Endothelial cell of umbilical vein (primary cell): ENCODE measurements at regions of chr17 and their contacts with region 1.

Region 1: GRCh38 chr17:72725433-72726068 is 366.9 kb downstream of the SLC39A11 start:
- DNase-seq: peak; percentile 53
- H3K4me3 ChIP-seq: no peak overlapping the region
- H3K27ac ChIP-seq: no peak overlapping the region
- H3K4me1 ChIP-seq: peaks cover 4% of the 10 kb centered on the region
- H3K27me3 ChIP-seq: no peaks in the 10 kb centered on the region
- CTCF ChIP-seq: peak; percentile 83 to 93
- POLR2A ChIP-seq: no peak

Region 2: GRCh38 chr17:72985881-72986720 is 260.6 kb after region 1 on chr17:
- CTCF ChIA-PET with region 1: interaction called, 61 read pairs
- POLR2A ChIA-PET with region 1: no interaction called
- dilution Hi-C with region 1: no loop called
- intact Hi-C with region 1: loop called (anchors 1 kb)
- DNase-seq: peak; percentile 53
- H3K4me3 ChIP-seq: no peak overlapping the region
- H3K27ac ChIP-seq: no peak overlapping the region
- H3K4me1 ChIP-seq: peaks cover 12% of the 10 kb centered on the region
- H3K27me3 ChIP-seq: no peaks in the 10 kb centered on the region
- CTCF ChIP-seq: peak; percentile 88 to 89
- POLR2A ChIP-seq: no peak

Region 3: DNA sequence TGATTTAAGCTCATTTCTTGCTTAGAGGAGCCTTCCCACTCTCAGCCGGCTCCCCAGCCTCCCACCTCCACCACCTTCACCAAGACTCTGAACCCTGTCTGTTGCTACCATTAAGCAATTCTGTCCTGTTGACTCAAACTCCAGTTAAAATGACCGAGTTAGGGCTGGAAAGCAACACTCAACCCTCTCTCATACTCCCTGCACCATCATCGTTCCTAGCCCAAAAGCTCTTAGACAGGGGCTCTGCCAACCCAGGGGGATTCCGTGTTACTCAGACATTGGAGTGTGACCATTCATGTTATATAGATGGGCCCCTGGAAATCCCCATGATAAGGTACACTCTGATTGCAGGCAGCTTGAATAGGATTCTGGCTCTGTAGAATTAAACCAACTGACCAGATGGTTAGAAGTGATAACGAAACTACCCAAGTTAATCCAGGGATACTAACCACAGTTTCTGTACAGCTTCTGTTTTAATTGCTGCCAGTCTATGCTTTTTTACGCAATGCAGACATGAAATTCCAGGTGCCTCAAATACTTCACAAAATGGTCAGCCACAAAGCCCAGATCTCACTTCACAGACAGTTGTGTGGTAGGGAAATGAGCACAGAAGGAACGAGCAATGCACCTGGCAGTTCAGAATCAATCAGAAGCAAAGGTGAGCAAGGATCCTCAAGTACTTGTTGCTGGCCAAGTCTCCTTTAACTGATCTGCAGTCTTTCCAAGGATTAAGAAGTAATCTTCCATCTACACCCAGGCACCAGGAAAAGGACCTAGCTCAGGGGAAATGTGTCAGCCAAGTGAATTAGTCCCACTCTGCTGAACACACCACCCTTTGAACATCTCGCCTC is 441.4 kb after region 1 on chr17:
- CTCF ChIA-PET with region 1: interaction called, 11 read pairs
- POLR2A ChIA-PET with region 1: no interaction called
- dilution Hi-C with region 1: no loop called
- intact Hi-C with region 1: no loop called
- DNase-seq: no peak
- H3K4me3 ChIP-seq: no peak overlapping the region
- H3K27ac ChIP-seq: no peak overlapping the region
- H3K4me1 ChIP-seq: no peaks in the 10 kb centered on the region
- H3K27me3 ChIP-seq: peaks cover 47 to 53% of the 10 kb centered on the region in 2 experiments
- CTCF ChIP-seq: no peak
- POLR2A ChIP-seq: no peak

Region 4: DNA sequence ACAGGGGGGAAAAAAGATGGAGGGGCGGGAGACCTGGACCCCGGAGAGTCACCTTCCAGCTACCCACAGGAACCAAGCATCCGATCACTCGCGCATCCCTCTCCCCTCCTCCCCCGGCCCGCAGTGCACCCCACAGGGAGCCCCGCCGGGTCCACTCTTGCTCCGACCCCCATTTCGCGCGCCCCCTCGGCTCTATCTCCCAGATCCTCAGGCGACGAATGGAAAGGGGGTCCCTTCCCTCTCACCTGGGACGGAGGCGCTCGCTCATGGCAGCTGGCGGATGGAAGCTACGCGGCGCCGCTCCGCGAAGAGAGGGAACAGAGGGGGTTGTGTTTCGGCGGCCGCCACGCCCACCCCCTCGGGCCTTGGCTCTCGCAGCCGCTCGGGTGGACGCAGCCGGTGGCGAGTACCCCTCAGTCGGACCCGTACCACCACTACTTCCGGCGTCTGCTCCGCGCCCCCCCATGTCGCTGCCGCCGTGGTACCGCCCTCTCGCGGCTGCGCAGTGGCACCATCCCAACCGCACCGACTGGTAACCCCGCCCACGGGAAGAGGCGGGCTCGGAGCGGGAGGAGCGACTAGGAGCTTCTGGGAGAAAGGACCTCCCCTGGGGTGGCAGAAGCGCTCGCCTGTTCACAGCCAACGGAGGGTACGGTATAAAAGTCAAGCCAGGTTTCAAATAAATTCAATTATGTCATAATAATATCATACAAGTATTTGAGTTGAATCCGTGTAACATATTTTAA is 506.5 kb after region 1 on chr17:
- CTCF ChIA-PET with region 1: interaction called, 16 read pairs
- POLR2A ChIA-PET with region 1: no interaction called
- dilution Hi-C with region 1: no loop called
- intact Hi-C with region 1: loop called (anchors 5 kb)
- DNase-seq: peak; percentile 96
- H3K4me3 ChIP-seq: peak overlapping the region; percentile 83 to 93 (median 84)
- H3K27ac ChIP-seq: peak overlapping the region; percentile 83
- H3K4me1 ChIP-seq: peaks cover 38% of the 10 kb centered on the region
- H3K27me3 ChIP-seq: no peaks in the 10 kb centered on the region
- CTCF ChIP-seq: no peak
- POLR2A ChIP-seq: peak; percentile 29

Region 5: GRCh38 chr17:73304971-73305812 is 579.6 kb after region 1 on chr17:
- CTCF ChIA-PET with region 1: interaction called, 13 read pairs
- POLR2A ChIA-PET with region 1: no interaction called
- dilution Hi-C with region 1: no loop called
- intact Hi-C with region 1: no loop called
- DNase-seq: peak; percentile 80
- H3K4me3 ChIP-seq: peak overlapping the region in 2 of 3 experiments; percentile 20 to 54
- H3K27ac ChIP-seq: peak overlapping the region; percentile 78
- H3K4me1 ChIP-seq: peaks cover 54% of the 10 kb centered on the region
- H3K27me3 ChIP-seq: no peaks in the 10 kb centered on the region
- CTCF ChIP-seq: peak; percentile 31 to 40
- POLR2A ChIP-seq: peak; percentile 58

Region 6: GRCh38 chr17:74176546-74177001 is 1451.0 kb after region 1 on chr17:
- CTCF ChIA-PET with region 1: interaction called, 4 read pairs
- POLR2A ChIA-PET with region 1: no interaction called
- dilution Hi-C with region 1: no loop called
- intact Hi-C with region 1: loop called (anchors 2 kb)
- DNase-seq: peak; percentile 57
- H3K4me3 ChIP-seq: no peak overlapping the region
- H3K27ac ChIP-seq: no peak overlapping the region
- H3K4me1 ChIP-seq: no peaks in the 10 kb centered on the region
- H3K27me3 ChIP-seq: no peaks in the 10 kb centered on the region
- CTCF ChIP-seq: peak; percentile 70 to 83
- POLR2A ChIP-seq: no peak